ENCODE measurements at regions of chr22 and their contacts with region 1.

Region 1: GRCh38 chr22:38872172-38872830 is at the start of gene CBX6:
- DNase-seq: peak; percentile 92
- H3K4me3 ChIP-seq: peak within 1 kb of the TSS; percentile 56 to 62
- H3K27ac ChIP-seq: peak within 1 kb of the TSS in 1 of 2 experiments; percentile 92; a peak in 2 of 4 replicates
- H3K4me1 ChIP-seq: peaks cover 0 to 5% of the 10 kb centered on the region in 2 experiments; a peak in 1 of 4 replicates
- H3K27me3 ChIP-seq: no peaks in the 10 kb centered on the region
- CTCF ChIP-seq: no peak
- EP300 ChIP-seq: no peak
- RAD21 ChIP-seq: no peak
- polyA plus RNA-seq, gene CBX6: 3.4 and 5.4 TPM in 2 replicates

Region 2: DNA sequence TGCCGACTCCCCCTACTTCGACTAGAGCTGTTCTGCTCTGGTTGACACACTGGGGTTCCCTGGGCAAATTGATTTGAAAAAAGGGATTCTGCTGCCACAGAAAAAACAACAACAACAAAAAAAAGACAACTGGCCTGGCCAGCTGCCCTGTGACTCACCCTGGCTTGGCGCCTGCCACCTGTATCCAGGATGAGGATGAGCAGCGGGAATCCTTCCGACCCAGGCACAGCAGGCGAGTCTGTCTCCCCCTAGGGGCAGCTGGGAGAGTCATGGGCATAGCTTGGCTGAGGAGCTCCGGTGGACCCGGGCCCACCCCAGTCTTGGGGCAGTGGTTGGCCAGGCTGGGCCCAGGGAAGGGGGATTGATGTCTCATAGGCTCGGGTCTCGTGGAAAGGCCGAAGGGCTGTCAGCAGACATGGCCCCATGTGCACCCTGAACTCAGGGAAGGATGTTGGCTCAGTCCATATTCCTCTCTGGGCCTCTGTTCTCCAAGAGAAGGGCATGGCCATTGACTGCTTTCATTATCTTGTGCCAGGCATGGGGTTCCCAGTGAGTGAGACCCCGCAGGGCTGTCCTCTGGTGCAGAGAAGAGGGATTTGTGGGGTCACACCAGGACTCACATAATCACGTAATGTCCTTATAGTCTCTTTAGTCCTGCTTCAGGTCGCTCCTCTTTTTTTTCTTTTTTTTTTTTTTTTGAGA is 106.1 kb before region 1 on chr22:
- CTCF ChIA-PET with region 1: interaction called, 37 read pairs
- POLR2A ChIA-PET with region 1: no interaction called
- DNase-seq: peak; percentile 77
- H3K4me3 ChIP-seq: no peak overlapping the region; a peak in 1 of 4 replicates
- H3K27ac ChIP-seq: no peak overlapping the region
- H3K4me1 ChIP-seq: peaks cover 0 to 3% of the 10 kb centered on the region in 2 experiments; a peak in 1 of 4 replicates
- H3K27me3 ChIP-seq: no peaks in the 10 kb centered on the region
- CTCF ChIP-seq: peak; percentile 65
- EP300 ChIP-seq: no peak
- RAD21 ChIP-seq: peak; percentile 35

Region 3: GRCh38 chr22:38853196-38853651 is 19.1 kb before region 1 on chr22:
- CTCF ChIA-PET with region 1: interaction called, 25 read pairs
- POLR2A ChIA-PET with region 1: interaction called, 3 read pairs
- DNase-seq: no peak
- H3K4me3 ChIP-seq: no peak overlapping the region
- H3K27ac ChIP-seq: no peak overlapping the region
- H3K4me1 ChIP-seq: peaks cover 0 to 3% of the 10 kb centered on the region in 2 experiments; a peak in 2 of 4 replicates
- H3K27me3 ChIP-seq: no peaks in the 10 kb centered on the region
- CTCF ChIP-seq: no peak
- EP300 ChIP-seq: no peak
- RAD21 ChIP-seq: no peak

Region 4: DNA sequence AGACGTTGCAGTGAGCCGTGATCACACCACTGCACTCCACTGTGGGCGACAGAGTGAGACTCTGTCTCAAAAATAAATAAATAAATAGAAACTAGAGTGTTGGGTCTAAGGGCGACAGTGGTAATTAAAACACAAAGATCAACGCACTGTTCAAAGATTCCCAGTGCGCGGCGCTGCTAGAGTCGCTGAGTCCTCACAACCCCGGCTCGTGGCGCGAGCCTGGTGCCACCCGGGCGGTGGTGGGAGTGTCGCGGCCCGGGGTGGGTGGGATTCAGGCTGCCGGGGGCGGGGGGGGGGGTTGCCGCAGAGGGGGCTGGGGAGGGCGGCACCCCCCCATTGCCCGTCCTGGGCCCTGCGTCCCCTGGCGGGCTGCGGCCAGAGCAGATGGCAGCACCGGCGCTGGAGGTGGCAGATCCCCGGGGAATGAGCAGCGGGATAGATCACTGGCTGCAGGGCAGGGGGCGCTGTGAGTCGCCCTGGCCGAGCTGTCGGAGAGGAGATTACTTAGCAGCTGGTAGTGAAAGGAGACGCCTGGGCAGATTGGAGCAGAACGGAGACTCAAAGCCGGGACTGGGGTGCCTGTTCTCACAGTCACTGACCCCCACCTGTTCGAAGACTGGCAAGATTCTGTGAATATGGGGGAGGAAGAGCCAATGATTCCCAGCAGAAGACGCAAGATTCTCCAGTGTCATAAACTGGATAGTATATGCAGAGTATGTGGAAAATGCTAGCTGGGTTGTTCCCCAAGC is 54.9 kb after region 1 on chr22:
- CTCF ChIA-PET with region 1: interaction called, 28 read pairs
- POLR2A ChIA-PET with region 1: no interaction called
- DNase-seq: peak; percentile 79
- H3K4me3 ChIP-seq: peak overlapping the region; percentile 21 to 41; a peak in 2 of 4 replicates
- H3K27ac ChIP-seq: no peak overlapping the region
- H3K4me1 ChIP-seq: peaks cover 13 to 15% of the 10 kb centered on the region in 2 experiments; a peak in 3 of 4 replicates
- H3K27me3 ChIP-seq: no peaks in the 10 kb centered on the region
- CTCF ChIP-seq: peak; percentile 54
- EP300 ChIP-seq: no peak
- RAD21 ChIP-seq: peak; percentile 53

Region 5: GRCh38 chr22:38981992-38982927 is 110.0 kb after region 1 on chr22 and contains the start of gene APOBEC3B:
- CTCF ChIA-PET with region 1: no interaction called
- POLR2A ChIA-PET with region 1: no interaction called
- DNase-seq: no peak
- H3K4me3 ChIP-seq: no peak within 1 kb of the TSS
- H3K27ac ChIP-seq: no peak within 1 kb of the TSS
- H3K4me1 ChIP-seq: no peaks in the 10 kb centered on the region
- H3K27me3 ChIP-seq: no peaks in the 10 kb centered on the region
- CTCF ChIP-seq: no peak
- EP300 ChIP-seq: no peak
- RAD21 ChIP-seq: no peak
- polyA plus RNA-seq, gene APOBEC3B: not detected in 2 replicates

Region 6: GRCh38 chr22:39003165-39003638 is 130.9 kb after region 1 on chr22:
- CTCF ChIA-PET with region 1: interaction called, 20 read pairs
- POLR2A ChIA-PET with region 1: no interaction called
- DNase-seq: peak; percentile 72
- H3K4me3 ChIP-seq: peak overlapping the region in 1 of 2 experiments; percentile 48; a peak in 1 of 4 replicates
- H3K27ac ChIP-seq: no peak overlapping the region
- H3K4me1 ChIP-seq: no peaks in the 10 kb centered on the region; a peak in 1 of 4 replicates
- H3K27me3 ChIP-seq: no peaks in the 10 kb centered on the region; the same call in 1 of the 2 replicates
- CTCF ChIP-seq: peak; percentile 64
- EP300 ChIP-seq: no peak
- RAD21 ChIP-seq: peak; percentile 53

Region 7: GRCh38 chr22:39110631-39111561 is 238.6 kb after region 1 on chr22:
- CTCF ChIA-PET with region 1: interaction called, 12 read pairs
- POLR2A ChIA-PET with region 1: no interaction called
- DNase-seq: peak; percentile 39
- H3K4me3 ChIP-seq: no peak overlapping the region
- H3K27ac ChIP-seq: no peak overlapping the region
- H3K4me1 ChIP-seq: peaks cover 0 to 5% of the 10 kb centered on the region in 2 experiments; a peak in 1 of 4 replicates
- H3K27me3 ChIP-seq: no peaks in the 10 kb centered on the region
- CTCF ChIP-seq: no peak
- EP300 ChIP-seq: no peak
- RAD21 ChIP-seq: no peak

Region 8: GRCh38 chr22:39123751-39124601 is 251.7 kb after region 1 on chr22:
- CTCF ChIA-PET with region 1: interaction called, 20 read pairs
- POLR2A ChIA-PET with region 1: no interaction called
- DNase-seq: peak; percentile 1
- H3K4me3 ChIP-seq: no peak overlapping the region
- H3K27ac ChIP-seq: no peak overlapping the region
- H3K4me1 ChIP-seq: no peaks in the 10 kb centered on the region
- H3K27me3 ChIP-seq: no peaks in the 10 kb centered on the region
- CTCF ChIP-seq: no peak
- EP300 ChIP-seq: no peak
- RAD21 ChIP-seq: no peak

Measured in SK-N-SH (cell line).